Astrocyte of the cerebellum (primary cell): ENCODE measurements at regions of chrX and their contacts with region 1.

Region 1: GRCh38 chrX:134144231-134144630 is 92.8 kb upstream of the CCDC160 start:
- DNase-seq: no peak
- H3K4me3 ChIP-seq: no peak overlapping the region
- CTCF ChIP-seq: peak; percentile 39

Region 2: GRCh38 chrX:133726211-133726641 is 418.0 kb before region 1 on chrX:
- in situ Hi-C with region 1: no loop called
- DNase-seq: peak; percentile 13
- H3K4me3 ChIP-seq: no peak overlapping the region
- CTCF ChIP-seq: no peak

Region 3: DNA sequence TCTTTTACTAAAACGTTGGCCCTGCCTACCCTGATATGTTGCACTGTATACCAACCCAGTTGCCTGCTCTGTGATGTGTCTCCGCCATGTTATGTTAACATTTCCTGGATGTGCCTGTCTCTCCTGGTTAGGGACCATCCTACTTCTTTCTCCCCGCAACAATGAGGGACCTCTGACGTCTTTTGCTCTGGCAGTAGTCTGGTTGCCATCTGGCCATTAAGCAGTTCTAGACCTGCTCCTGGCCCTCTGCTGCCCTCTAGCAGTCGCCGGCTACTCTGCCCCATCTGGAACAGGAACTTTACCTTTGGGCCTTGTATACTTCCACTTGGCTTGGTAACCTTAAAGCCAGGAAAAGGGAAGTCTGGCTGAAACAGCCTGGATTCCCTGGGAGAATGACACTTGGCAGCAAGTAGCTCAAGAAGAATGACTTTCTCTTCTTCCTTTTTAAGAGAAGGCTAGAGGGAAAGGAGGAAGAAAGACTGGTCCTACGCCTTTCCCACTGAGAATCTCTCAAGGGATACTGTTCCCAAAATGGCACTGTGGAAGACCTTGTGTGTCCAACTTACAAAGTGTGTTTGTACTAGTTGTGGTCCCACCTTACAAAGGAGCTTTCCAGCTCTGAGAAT is 222.4 kb before region 1 on chrX:
- in situ Hi-C with region 1: no loop called
- DNase-seq: no peak
- H3K4me3 ChIP-seq: no peak overlapping the region
- CTCF ChIP-seq: peak; percentile 49

Region 4: DNA sequence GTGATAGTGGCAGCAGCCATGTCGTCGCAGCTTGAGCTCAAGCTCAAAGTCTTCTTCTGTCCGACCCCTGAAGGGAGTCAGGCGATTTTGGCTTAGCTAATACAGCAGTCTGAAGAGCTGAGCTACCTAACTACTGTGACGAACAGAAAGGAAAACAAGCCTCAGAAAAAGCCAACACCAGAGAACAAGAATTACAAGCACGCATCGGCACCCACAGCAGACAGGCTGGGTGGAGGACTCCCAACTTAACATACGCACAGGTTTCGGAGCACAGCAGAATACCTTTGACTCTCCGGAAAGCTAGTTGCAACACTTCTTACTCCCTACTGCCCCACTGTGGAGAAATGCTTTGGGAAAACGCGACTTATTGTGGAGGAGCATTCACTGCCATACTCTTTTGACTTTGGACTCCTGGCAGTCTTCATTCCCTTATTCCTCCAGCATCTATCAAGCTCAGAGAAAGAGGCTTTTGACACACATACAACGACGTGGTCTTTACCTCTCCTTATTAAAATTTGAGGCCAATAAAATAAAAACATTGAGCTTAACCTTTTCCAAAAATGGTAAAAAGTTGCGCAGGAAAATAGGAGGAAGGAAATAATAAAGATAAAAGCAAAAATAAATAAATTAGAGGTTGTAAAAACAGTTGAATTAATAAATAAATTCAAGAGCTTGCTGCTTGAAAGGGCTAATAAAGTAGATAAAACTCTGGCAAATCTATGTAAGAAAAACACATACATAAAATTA is 117.5 kb before region 1 on chrX:
- in situ Hi-C with region 1: loop called (anchors 10 kb)
- DNase-seq: peak; percentile 22
- H3K4me3 ChIP-seq: no peak overlapping the region
- CTCF ChIP-seq: peak; percentile 57

Region 5: DNA sequence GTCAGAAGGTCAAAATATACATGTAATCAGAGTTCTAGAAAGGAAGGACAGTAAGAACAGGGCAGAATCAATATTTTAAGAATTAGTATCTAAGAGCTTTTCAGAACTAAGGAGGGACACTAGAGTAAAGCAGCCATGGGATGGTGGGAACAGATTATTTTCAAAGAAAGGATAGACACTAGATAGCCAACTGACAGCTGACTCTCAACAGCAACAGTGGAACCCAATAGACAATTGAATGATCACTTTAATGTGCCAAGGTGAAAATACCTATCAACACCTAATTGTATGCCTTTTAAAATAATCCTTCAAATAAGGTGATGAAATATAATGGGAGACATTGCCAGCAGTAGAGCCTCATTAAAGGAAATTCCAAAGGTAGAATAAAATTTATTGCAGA is 66.2 kb after region 1 on chrX:
- in situ Hi-C with region 1: no loop called
- DNase-seq: no peak
- H3K4me3 ChIP-seq: no peak overlapping the region
- CTCF ChIP-seq: no peak